HEK293 (cell line): ENCODE measurements at regions of chr22 and their contacts with region 1.

Region 1: DNA sequence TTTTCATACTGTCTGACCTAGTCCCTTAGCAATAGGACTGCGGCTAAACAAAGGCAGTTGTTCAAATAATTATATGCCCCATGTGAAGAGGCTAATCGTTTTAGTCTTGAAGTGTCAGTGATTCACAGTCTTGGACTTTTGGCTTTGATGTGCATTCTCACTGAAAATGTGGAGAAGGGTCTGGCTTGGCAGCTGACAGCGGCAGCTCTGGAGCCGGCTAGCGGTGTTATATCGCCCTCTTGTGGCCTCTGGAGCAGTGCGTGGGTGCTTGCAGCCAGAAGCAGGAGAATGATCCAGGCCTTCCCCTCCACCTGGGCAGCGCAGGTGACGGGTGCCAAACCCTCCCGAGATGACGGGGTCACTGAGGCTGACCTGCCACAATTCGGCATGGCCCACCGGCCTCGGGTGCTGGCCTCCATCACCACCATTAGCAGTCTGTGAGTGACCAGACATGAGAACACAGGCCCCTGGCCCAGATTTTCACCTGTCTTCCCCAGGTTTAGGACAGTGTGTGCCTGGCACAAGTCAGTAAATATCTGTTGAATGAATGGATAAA is 90.3 kb upstream of the PITPNB start:
- H3K4me3 ChIP-seq: no peak overlapping the region
- H3K27ac ChIP-seq: no peak overlapping the region
- H3K4me1 ChIP-seq: no peaks in the 10 kb centered on the region
- CTCF ChIP-seq: peak; percentile 93

Region 2: DNA sequence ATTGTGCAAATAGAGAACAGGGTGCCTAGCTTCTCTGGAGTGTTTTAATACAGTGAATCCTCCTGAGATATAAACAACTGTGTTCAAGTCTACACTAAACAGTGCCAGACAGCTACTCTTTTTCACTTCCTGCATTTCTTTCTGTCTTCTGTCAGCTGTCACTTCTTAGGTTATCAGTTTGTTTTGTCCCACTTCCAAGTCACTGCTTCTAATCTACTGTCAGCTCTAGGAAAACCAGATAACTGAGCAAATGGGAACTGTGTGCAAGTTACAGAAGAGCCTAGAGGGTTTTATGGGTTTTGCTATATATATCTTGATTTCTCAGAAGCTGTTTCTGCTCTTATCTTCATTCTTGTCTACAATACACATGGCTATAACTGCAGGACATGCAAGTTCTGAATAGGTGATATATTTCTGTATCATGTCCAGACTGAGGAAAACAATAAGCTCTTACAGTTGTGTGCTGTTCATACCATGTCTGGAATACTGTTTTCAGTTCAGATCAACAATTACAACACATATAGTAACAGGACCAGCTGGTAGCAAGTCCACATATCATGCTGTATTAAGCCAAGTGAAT is 96.1 kb before region 1 on chr22:
- CTCF ChIA-PET with region 1: interaction called, 11 read pairs
- POLR2A ChIA-PET with region 1: no interaction called
- H3K4me3 ChIP-seq: no peak overlapping the region
- H3K27ac ChIP-seq: peak overlapping the region; percentile 50
- H3K4me1 ChIP-seq: peaks cover 54% of the 10 kb centered on the region
- CTCF ChIP-seq: no peak

Region 3: DNA sequence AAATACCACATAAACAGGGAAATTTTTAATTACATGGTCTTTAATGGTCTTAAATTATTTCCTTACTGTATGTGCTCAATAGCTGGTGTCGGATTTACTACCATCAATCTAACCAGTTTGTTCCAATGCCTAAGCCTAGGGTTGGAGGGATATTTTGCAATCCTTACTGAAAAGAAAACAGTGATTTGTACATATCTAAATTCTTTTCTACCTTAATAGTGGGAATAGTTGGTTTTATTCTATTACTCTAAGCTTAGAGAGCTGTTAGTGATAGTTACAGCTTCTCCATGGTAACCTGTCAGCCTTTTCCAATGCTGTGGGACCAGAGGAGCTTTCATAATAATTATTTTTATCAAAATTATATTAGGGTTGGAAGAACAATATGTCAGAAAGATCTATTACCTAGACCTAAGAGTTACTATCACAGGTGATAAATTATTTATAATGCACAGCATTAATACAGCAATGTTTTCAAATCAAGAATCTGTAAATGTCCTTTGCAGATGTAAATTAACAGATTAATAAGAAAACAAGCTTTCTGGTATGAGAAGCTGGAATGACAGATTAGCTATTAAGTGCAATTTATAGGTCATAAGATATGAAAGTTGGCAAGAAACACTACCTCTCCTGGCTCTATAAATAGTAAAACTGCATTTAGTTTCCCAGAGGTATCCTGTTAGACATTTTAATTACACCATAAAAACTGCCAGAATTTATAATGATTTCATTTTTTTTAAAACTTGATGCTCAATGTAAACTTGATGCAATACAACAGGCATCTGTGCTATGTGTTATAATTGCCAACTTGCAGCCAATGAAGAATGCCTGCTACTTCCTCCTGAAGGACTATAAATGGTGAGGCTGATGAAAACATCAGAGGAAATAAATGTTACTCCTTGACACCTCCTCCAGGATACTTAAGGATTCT is 171.7 kb after region 1 on chr22:
- CTCF ChIA-PET with region 1: no interaction called
- POLR2A ChIA-PET with region 1: no interaction called
- H3K4me3 ChIP-seq: no peak overlapping the region
- H3K27ac ChIP-seq: no peak overlapping the region
- H3K4me1 ChIP-seq: peaks cover 4% of the 10 kb centered on the region
- CTCF ChIP-seq: no peak